Activated naive CD8-positive, alpha-beta T cell treated with anti-CD3 and anti-CD28 coated beads, Interleukin-2, amount 10 ng/mL, durations not matched to agents 7 days and 5 days (primary cell): ENCODE measurements at regions of chr19 and their contacts with region 1.

Region 1: GRCh38 chr19:21851596-21852345 is 15.8 kb upstream of the ZNF43 start:
- DNase-seq: peak; percentile 84
- ATAC-seq: peak; percentile 98
- H3K4me3 Mint-ChIP-seq: peak overlapping the region; percentile 92
- H3K27ac Mint-ChIP-seq: peak overlapping the region; percentile 89
- H3K4me1 Mint-ChIP-seq: peaks cover 18% of the 10 kb centered on the region
- H3K27me3 Mint-ChIP-seq: no peaks in the 10 kb centered on the region

Region 2: DNA sequence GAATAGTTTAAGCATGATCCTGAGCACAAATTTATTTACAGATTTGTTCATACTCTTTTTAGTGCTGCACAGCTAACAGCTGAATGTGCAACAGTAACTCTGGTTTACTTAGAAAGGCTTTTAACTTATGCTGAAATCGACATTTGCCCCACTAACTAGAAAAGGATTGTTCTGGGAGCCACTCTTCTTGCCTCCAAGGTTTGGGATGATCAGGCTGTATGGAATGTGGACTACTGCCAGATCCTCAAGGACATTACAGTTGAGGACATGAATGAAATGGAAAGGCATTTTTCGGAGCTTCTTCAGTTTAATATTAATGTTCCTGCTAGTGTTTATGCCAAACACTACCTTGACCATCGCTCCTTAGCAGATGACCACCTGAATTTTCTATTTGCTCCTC is 100.4 kb before region 1 on chr19:
- POLR2A ChIA-PET with region 1: no interaction called
- DNase-seq: no peak
- ATAC-seq: no peak
- H3K4me3 Mint-ChIP-seq: no peak overlapping the region
- H3K27ac Mint-ChIP-seq: no peak overlapping the region
- H3K4me1 Mint-ChIP-seq: peaks cover 2% of the 10 kb centered on the region
- H3K27me3 Mint-ChIP-seq: no peaks in the 10 kb centered on the region

Region 3: GRCh38 chr19:21767065-21767800 is 84.5 kb before region 1 on chr19 and contains the start of gene ZNF100:
- POLR2A ChIA-PET with region 1: interaction called, 24 read pairs
- DNase-seq: peak; percentile 81
- ATAC-seq: peak; percentile 97
- H3K4me3 Mint-ChIP-seq: peak within 1 kb of the TSS; percentile 98
- H3K27ac Mint-ChIP-seq: peak within 1 kb of the TSS; percentile 96
- H3K4me1 Mint-ChIP-seq: peaks cover 15% of the 10 kb centered on the region
- H3K27me3 Mint-ChIP-seq: no peaks in the 10 kb centered on the region
- total RNA-seq, gene ZNF100: 17.7 to 21.9 TPM